ENCODE measurements at regions of chr5 and their contacts with region 1.

Region 1: GRCh38 chr5:17477573-17478265 is 20.3 kb upstream of the TAF11L2 start:
- DNase-seq: no peak
- H3K4me3 ChIP-seq: no peak overlapping the region
- H3K27ac ChIP-seq: no peak overlapping the region
- H3K4me1 ChIP-seq: no peaks in the 10 kb centered on the region
- H3K27me3 ChIP-seq: peaks cover 23% of the 10 kb centered on the region
- CTCF ChIP-seq: no peak

Region 2: GRCh38 chr5:18292146-18292545 is 814.4 kb after region 1 on chr5:
- CTCF ChIA-PET with region 1: interaction called, 17 read pairs
- POLR2A ChIA-PET with region 1: no interaction called
- intact Hi-C with region 1: no loop called
- DNase-seq: no peak
- H3K4me3 ChIP-seq: no peak overlapping the region
- H3K27ac ChIP-seq: no peak overlapping the region
- H3K4me1 ChIP-seq: no peaks in the 10 kb centered on the region
- H3K27me3 ChIP-seq: no peaks in the 10 kb centered on the region
- CTCF ChIP-seq: no peak